SK-N-SH (cell line): ENCODE measurements at regions of chr7 and their contacts with region 1.

Region 1: GRCh38 chr7:26376175-26376917 is 84.7 kb downstream of the SNX10 start:
- DNase-seq: peak; percentile 94
- H3K4me3 ChIP-seq: peak overlapping the region in 1 of 2 experiments; percentile 55; a peak in 2 of 4 replicates
- H3K27ac ChIP-seq: peak overlapping the region in 1 of 2 experiments; percentile 89; a peak in 2 of 4 replicates
- H3K4me1 ChIP-seq: peaks cover 0 to 5% of the 10 kb centered on the region in 2 experiments; a peak in 2 of 4 replicates
- H3K27me3 ChIP-seq: peaks cover 38% of the 10 kb centered on the region
- CTCF ChIP-seq: no peak
- EP300 ChIP-seq: no peak
- RAD21 ChIP-seq: no peak

Region 2: DNA sequence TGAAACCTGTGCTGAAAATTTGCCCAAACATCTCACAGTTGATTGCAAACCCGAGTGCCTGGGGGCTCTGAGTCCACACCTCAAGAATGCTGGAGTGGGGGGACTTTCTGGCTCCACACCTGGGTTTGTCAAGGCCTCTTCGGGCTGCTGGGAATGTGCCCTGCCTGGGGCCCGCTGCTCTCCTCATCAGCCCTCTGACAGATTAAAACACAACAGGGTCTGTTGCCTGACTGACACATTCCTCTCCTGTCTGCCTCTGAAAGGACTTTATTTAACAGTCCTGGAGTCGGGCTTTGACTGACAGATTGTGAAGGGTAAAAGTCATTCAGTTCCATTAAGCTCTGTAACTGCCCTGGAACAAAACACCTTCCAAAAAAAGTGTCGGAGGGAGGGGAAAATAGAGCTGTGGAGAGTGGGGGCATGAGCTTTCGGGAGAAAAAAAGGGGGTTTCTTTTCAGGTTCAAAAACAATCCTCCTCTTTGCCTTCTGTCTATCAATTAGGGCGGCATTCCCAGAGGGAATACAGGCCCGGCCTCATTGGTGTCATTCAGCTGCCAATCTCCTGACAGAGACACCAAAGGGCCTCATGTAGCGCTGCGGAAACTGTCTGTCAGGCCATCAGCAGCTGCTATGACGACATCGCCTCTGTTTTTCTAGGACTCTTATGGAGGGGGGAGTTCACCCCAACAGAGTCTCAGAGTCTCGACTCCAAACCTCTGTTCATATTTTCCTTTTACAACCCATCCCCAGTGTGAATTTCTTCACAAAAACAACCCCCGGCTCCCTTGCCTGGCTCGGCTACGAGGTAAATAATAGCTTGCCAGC is 623.2 kb before region 1 on chr7:
- CTCF ChIA-PET with region 1: no interaction called
- POLR2A ChIA-PET with region 1: no interaction called
- DNase-seq: no peak
- H3K4me3 ChIP-seq: no peak overlapping the region
- H3K27ac ChIP-seq: no peak overlapping the region
- H3K4me1 ChIP-seq: peaks cover 0 to 2% of the 10 kb centered on the region in 2 experiments; a peak in 1 of 4 replicates
- H3K27me3 ChIP-seq: no peaks in the 10 kb centered on the region
- CTCF ChIP-seq: no peak
- EP300 ChIP-seq: no peak
- RAD21 ChIP-seq: no peak

Region 3: GRCh38 chr7:25795824-25796235 is 580.5 kb before region 1 on chr7:
- CTCF ChIA-PET with region 1: no interaction called
- POLR2A ChIA-PET with region 1: no interaction called
- DNase-seq: no peak
- H3K4me3 ChIP-seq: peak overlapping the region in 1 of 2 experiments; percentile 20; a peak in 1 of 4 replicates
- H3K27ac ChIP-seq: no peak overlapping the region
- H3K4me1 ChIP-seq: no peaks in the 10 kb centered on the region
- H3K27me3 ChIP-seq: no peaks in the 10 kb centered on the region
- CTCF ChIP-seq: no peak
- EP300 ChIP-seq: no peak
- RAD21 ChIP-seq: no peak

Region 4: GRCh38 chr7:26117142-26117807 is 259.1 kb before region 1 on chr7:
- CTCF ChIA-PET with region 1: no interaction called
- POLR2A ChIA-PET with region 1: no interaction called
- DNase-seq: peak; percentile 58
- H3K4me3 ChIP-seq: no peak overlapping the region
- H3K27ac ChIP-seq: no peak overlapping the region
- H3K4me1 ChIP-seq: no peaks in the 10 kb centered on the region
- H3K27me3 ChIP-seq: no peaks in the 10 kb centered on the region; the same call in 1 of the 2 replicates
- CTCF ChIP-seq: no peak
- EP300 ChIP-seq: no peak
- RAD21 ChIP-seq: no peak

Region 5: GRCh38 chr7:26318921-26319320 is 57.4 kb before region 1 on chr7:
- CTCF ChIA-PET with region 1: no interaction called
- POLR2A ChIA-PET with region 1: no interaction called
- DNase-seq: no peak
- H3K4me3 ChIP-seq: no peak overlapping the region
- H3K27ac ChIP-seq: no peak overlapping the region
- H3K4me1 ChIP-seq: no peaks in the 10 kb centered on the region
- H3K27me3 ChIP-seq: no peaks in the 10 kb centered on the region
- CTCF ChIP-seq: 0 out of 2 replicates have a peak, but pooled peaks have one; percentile 10
- EP300 ChIP-seq: no peak
- RAD21 ChIP-seq: no peak

Region 6: DNA sequence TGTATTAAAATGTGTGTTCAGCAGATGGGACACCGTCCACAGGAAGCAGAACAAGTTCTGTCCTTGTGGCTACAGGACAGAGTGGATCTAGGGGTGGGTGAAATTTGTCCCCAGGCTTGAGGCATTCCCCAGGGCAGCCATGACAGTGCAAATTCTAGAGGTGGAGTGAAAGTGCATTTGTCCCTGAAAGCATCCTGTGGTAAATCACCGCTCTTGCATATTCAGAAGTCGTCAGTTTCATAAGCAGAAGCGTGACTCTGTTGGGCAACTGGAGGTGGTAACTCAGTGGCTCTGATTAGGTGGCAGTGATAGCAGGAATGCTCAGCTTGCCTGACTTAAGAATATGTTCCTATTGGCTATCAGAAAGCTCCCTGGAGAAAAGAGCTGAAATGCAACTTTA is 11.9 kb after region 1 on chr7:
- CTCF ChIA-PET with region 1: interaction called, 11 read pairs
- POLR2A ChIA-PET with region 1: no interaction called
- DNase-seq: no peak
- H3K4me3 ChIP-seq: no peak overlapping the region
- H3K27ac ChIP-seq: no peak overlapping the region
- H3K4me1 ChIP-seq: no peaks in the 10 kb centered on the region
- H3K27me3 ChIP-seq: peaks cover 5% of the 10 kb centered on the region; the same call in 1 of the 2 replicates
- CTCF ChIP-seq: no peak
- EP300 ChIP-seq: no peak
- RAD21 ChIP-seq: no peak

Region 7: DNA sequence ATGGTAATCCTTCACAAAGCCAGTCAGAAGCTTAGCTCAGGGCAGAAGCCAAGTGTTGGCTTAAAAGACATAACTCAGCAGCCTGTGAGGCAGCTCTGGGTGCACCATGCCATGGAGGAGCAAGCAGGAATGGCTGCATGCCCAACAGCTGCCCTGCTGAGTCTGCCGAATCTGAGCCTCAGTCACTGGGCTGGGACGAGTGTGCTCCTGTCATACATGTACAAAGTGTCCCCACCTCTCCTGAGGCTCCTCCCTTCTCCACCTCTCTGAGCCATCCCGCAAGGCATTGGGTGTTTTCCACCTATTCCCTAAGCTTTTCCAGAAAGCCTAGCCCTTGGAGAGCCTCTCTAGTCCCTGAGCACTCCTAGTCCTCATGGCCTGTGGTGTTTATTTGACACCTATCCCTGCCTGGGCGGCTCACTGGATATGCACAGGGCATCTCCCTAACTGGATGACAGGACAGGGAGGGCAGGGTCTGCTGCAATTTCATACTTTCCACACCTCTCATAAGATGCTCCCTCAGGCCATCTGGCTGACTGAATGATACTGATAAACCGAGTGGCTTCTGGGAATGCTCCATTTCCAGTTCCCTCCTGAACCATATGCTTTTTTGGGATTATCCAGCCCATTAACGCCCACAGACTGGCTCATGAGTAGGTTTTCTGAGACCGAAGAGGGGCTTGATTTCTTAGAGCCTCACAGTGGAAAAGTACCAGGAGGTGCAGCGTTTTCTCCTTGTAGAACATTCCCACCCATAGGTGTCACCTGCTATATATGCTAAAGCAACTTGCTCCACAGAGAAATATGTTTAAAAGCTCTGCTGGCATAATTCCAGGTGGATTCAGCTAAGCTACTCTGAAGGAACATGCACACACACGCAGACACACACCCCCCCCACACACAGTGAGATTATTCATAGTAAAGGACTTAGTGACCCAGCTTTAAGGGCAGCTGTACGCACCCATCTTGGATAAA is 114.6 kb after region 1 on chr7:
- CTCF ChIA-PET with region 1: interaction called, 17 read pairs
- POLR2A ChIA-PET with region 1: interaction called, 4 read pairs
- DNase-seq: peak; percentile 55
- H3K4me3 ChIP-seq: no peak overlapping the region
- H3K27ac ChIP-seq: no peak overlapping the region
- H3K4me1 ChIP-seq: peaks cover 0 to 27% of the 10 kb centered on the region in 2 experiments; a peak in 2 of 4 replicates
- H3K27me3 ChIP-seq: no peaks in the 10 kb centered on the region
- CTCF ChIP-seq: no peak
- EP300 ChIP-seq: no peak
- RAD21 ChIP-seq: no peak

Region 8: GRCh38 chr7:26534649-26535482 is 158.5 kb after region 1 on chr7:
- CTCF ChIA-PET with region 1: interaction called, 12 read pairs
- POLR2A ChIA-PET with region 1: no interaction called
- DNase-seq: no peak
- H3K4me3 ChIP-seq: no peak overlapping the region
- H3K27ac ChIP-seq: peak overlapping the region in 1 of 2 experiments; percentile 79; a peak in 2 of 4 replicates
- H3K4me1 ChIP-seq: peaks cover 0 to 32% of the 10 kb centered on the region in 2 experiments; a peak in 2 of 4 replicates
- H3K27me3 ChIP-seq: no peaks in the 10 kb centered on the region
- CTCF ChIP-seq: no peak
- EP300 ChIP-seq: no peak
- RAD21 ChIP-seq: no peak

Region 9: GRCh38 chr7:26593393-26593792 is 217.0 kb after region 1 on chr7:
- CTCF ChIA-PET with region 1: interaction called, 10 read pairs
- POLR2A ChIA-PET with region 1: no interaction called
- DNase-seq: peak; percentile 68
- H3K4me3 ChIP-seq: no peak overlapping the region
- H3K27ac ChIP-seq: peak overlapping the region in 1 of 2 experiments; percentile 60; a peak in 1 of 4 replicates
- H3K4me1 ChIP-seq: peaks cover 0 to 29% of the 10 kb centered on the region in 2 experiments; a peak in 2 of 4 replicates
- H3K27me3 ChIP-seq: no peaks in the 10 kb centered on the region
- CTCF ChIP-seq: no peak
- EP300 ChIP-seq: no peak
- RAD21 ChIP-seq: 0 out of 2 replicates have a peak, but pooled peaks have one; percentile 12